ENCODE measurements at regions of chr1 and their contacts with region 1.

Region 1: DNA sequence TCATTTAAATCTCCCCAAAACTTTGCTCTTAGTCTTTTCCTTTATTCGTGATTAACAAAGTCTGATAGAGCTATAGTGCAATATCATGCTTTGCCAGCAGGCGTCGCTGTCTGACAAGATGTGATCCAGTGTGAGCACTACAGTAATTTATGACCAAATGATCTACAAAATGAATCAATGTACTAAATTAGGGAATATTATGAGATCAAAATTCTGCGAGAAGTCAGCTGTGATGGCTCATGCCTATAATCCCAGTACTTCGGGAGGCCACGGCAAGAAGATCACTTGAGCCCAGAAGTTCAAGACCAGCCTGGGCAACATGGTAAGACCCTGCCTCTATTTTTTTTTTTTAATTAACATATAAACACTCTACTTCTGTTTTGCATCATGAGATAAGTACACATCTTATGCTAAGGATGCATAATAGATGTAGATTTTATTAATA is 3.6 kb upstream of the SPSB1 start:
- DNase-seq: peak; percentile 77 to 94
- H3K4me3 ChIP-seq: no peak overlapping the region
- CTCF ChIP-seq: peak in 2 of 3 donors; percentile 22 to 94
- POLR2A ChIP-seq: no peak

Region 2: GRCh38 chr1:9350013-9350908 is 61.1 kb after region 1 on chr1:
- intact Hi-C with region 1: no loop called
- DNase-seq: no peak
- H3K4me3 ChIP-seq: no peak overlapping the region
- CTCF ChIP-seq: no peak
- POLR2A ChIP-seq: no peak

Region 3: GRCh38 chr1:9426291-9426711 is 137.2 kb after region 1 on chr1:
- intact Hi-C with region 1: no loop called
- DNase-seq: no peak
- H3K4me3 ChIP-seq: no peak overlapping the region
- CTCF ChIP-seq: no peak
- POLR2A ChIP-seq: no peak

Region 4: DNA sequence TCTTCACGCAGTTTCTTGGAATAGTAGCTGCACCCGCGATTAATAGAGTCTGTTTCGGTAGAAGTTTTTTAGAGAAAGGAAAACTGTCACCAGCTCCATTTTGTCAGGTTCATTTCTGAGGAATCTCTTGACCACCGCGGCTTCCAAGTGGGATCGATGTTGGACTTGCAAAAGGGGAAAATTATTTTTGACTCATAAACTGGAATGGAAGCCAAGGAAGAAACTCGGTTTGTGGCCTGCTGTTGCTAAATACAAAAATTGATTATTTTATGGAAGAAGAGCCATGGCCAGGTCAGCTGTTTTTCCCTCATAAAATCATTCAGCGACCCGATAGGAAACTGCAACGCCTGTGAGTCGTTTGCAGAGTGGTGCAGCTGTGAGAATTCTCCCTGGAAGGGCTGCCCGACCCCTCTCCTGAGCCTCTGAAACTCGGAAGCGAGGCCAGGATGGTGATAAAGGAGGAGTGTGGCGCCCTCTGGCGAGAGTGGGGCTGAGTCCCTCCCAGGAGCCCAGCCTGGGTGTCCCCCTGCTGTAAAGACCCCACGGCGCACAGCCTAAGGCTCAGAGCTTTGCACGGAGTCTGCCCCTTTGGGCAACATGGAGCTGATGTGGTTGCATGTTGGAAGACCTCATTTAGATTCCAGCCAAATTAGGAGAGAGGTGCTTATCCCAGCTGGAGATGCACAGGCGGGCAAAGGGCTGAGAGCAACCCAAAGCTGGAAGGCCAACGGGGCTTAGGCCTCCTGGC is 166.5 kb after region 1 on chr1:
- intact Hi-C with region 1: loop called (anchors 10 kb)
- DNase-seq: no peak
- H3K4me3 ChIP-seq: no peak overlapping the region
- CTCF ChIP-seq: peak in 1 of 3 donors; percentile 61
- POLR2A ChIP-seq: no peak

Region 5: GRCh38 chr1:9494929-9495758 is 206.0 kb after region 1 on chr1:
- intact Hi-C with region 1: loop called (anchors 2 kb)
- DNase-seq: peak in 1 of 2 donors; percentile 86
- H3K4me3 ChIP-seq: no peak overlapping the region
- CTCF ChIP-seq: peak in 1 of 3 donors; percentile 51
- POLR2A ChIP-seq: no peak

Region 6: DNA sequence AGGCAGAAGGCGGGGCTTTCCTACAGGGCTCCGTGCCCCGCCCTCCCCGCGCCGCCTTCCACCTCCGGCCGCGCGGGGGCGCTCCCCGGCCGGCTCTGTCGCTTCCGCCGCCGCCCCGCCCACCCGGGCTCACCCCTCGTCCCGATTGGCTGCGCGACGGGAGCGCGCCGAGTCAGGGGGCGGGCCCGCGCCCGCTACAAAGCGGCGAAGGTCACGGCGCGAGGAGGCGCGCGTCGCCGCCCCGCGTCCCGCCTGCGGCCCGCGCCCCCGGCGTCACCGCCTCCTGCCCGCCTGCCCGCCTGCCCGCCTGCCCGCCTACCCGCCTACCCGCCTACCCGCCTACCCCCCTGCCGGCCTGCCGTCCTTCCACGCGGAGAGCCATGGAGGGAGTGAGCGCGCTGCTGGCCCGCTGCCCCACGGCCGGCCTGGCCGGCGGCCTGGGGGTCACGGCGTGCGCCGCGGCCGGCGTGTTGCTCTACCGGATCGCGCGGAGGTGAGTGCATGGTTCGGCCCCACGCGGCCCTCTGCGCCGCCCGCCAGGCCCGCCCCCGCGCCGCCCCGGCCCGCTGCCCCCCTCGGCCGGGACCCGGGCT is 299.5 kb after region 1 on chr1 and contains the start of gene TMEM201:
- intact Hi-C with region 1: loop called (anchors 10 kb)
- DNase-seq: peak; percentile 90 to 98
- H3K4me3 ChIP-seq: peak within 1 kb of the TSS; percentile 51
- CTCF ChIP-seq: no peak
- POLR2A ChIP-seq: no peak
- total RNA-seq, gene TMEM201: 7.0 to 12.4 (median 9.7) TPM